RWPE1 (cell line): ENCODE measurements at regions of chr18 and their contacts with region 1.

Region 1: GRCh38 chr18:34647251-34647650 is 62.8 kb upstream of the DTNA start:
- DNase-seq: no peak
- H3K27ac ChIP-seq: no peak overlapping the region
- CTCF ChIP-seq: no peak

Region 2: GRCh38 chr18:34661464-34662111 is 14.3 kb after region 1 on chr18:
- CTCF ChIA-PET with region 1: interaction called, 11 read pairs
- POLR2A ChIA-PET with region 1: no interaction called
- DNase-seq: peak; percentile 37
- H3K27ac ChIP-seq: no peak overlapping the region
- CTCF ChIP-seq: peak; percentile 84